ENCODE measurements at regions of chr16 and their contacts with region 1.

Region 1: DNA sequence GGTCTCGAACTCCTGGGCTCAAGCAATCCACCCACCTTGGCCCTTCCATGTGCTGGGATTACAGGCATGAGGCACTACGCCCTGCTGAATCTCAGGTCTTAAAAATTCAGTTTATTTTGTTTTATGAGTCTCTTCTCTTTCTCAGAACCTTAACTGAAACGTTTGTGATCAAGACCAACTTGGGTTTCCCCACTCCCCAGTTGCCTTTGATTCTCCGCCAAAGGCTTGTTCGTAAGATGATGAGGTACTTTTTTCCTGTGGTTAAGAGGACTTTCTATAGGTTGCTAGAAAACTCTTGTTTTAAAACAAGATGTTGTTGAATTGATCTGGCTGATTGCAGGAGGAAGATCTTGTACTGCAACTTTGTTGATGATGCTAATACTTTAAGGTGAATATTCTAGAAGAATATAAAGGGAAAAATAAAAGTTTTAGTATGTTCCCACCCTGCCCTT is 11.7 kb downstream of the ABCC1 start:
- DNase-seq: peak; percentile 82
- ATAC-seq: peak; percentile 79
- H3K4me3 Mint-ChIP-seq: peak overlapping the region; percentile 83
- H3K27ac Mint-ChIP-seq: peak overlapping the region; percentile 99
- H3K4me1 Mint-ChIP-seq: peaks cover 72% of the 10 kb centered on the region
- H3K27me3 Mint-ChIP-seq: no peaks in the 10 kb centered on the region

Region 2: DNA sequence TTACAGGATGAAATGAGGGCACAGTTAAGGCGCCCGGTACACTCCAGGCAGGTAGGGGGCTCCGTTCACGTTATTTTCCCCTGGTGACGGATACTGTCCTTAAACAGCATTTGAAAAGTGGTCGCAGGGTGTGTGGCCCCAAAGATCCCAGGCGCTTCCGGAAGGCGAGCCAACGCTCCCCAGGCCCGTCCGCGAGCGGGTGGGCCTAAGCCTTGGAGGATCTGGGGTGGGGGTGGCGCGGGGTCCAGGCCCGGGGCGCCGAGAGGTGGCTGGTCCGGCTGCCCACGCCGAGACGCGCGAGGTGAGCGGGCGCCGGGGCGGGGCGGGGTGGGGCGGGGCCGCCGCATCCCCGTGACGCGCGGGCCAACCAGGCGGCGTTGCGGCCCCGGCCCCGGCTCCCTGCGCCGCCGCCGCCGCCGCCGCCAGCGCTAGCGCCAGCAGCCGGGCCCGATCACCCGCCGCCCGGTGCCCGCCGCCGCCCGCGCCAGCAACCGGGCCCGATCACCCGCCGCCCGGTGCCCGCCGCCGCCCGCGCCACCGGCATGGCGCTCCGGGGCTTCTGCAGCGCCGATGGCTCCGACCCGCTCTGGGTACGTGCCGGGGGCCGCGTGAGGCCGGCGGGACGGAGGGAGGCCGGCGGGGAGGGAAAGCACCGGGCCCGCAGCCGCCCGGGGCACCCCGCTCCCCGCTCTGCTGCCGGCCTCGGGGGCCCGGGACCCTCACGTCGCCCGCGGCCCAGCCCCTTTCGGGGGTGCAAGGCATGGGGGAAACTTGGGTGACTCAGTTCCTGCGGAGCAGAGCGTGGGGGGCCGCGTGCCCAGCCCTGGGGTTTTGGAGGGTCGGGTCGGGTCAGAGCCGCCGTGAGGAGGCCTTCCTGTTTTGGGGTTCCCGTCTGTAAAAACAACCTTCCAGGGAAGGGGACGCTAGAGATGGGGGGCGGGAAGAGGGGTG is 11.6 kb before region 1 on chr16 and contains the start of gene ABCC1:
- CTCF ChIA-PET with region 1: interaction called, 11 read pairs
- DNase-seq: peak; percentile 67
- ATAC-seq: peak; percentile 85
- H3K4me3 Mint-ChIP-seq: peak within 1 kb of the TSS; percentile 91
- H3K27ac Mint-ChIP-seq: peak within 1 kb of the TSS; percentile 97
- H3K4me1 Mint-ChIP-seq: peaks cover 40% of the 10 kb centered on the region
- H3K27me3 Mint-ChIP-seq: no peaks in the 10 kb centered on the region
- total RNA-seq, gene ABCC1: 54.9 to 76.8 TPM